Thyroid gland (tissue), 4 donors: ENCODE measurements at regions of chr11 and their contacts with region 1.

Region 1: DNA sequence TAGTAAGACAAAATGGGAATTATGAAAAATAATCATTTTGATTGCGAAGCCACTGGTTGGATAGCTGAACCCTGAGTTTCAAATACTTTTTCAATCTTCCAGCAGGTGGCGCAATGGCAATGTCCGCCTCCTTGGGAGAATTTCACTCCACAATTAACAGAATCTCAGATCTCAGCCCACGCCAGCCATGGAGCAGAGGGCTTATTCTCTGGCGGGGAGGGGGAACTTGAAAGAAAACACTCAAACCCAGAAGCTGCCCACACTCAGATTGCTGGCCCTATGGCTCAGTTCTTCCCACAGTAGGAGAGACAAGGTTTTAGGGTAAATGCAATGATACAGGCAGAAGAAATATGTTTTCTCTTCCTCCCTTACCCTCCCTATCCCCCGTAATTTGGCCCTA is 38.7 kb upstream of the RCN1 start:
- DNase-seq: peak; percentile 48 to 56
- H3K4me3 ChIP-seq: no peak overlapping the region
- H3K27ac ChIP-seq: no peak overlapping the region
- H3K4me1 ChIP-seq: no peaks in the 10 kb centered on the region
- H3K27me3 ChIP-seq: no peaks in the 10 kb centered on the region
- CTCF ChIP-seq: peak in 5 of 6 experiments; percentile 53 to 76 (median 72)
- POLR2A ChIP-seq: no peak

Region 2: DNA sequence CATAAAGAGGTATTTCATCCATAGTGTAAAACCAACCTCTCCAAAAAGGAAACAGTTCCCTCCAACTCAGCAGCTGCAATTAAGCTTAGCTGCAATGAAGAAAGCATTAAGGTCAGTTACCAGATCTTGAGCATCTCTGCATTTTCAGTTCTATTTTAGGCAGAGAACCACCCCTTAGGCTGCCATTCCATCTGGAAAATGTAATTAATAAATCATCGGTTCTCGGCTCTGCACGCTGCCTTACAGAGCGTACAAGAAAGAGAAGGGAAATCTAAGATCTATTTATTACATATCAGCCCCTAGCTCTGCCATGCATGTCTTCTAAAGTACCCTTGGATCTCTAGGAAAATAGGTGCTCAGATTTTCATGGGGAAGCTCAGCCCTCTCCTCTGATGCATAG is 110.1 kb after region 1 on chr11:
- intact Hi-C with region 1: no loop called
- DNase-seq: no peak
- H3K4me3 ChIP-seq: no peak overlapping the region
- H3K27ac ChIP-seq: no peak overlapping the region
- H3K4me1 ChIP-seq: no peaks in the 10 kb centered on the region
- H3K27me3 ChIP-seq: no peaks in the 10 kb centered on the region
- CTCF ChIP-seq: no peak
- POLR2A ChIP-seq: no peak

Region 3: GRCh38 chr11:32176223-32176934 is 124.2 kb after region 1 on chr11:
- intact Hi-C with region 1: loop called (anchors 2 kb)
- DNase-seq: peak; percentile 79 to 82
- H3K4me3 ChIP-seq: no peak overlapping the region
- H3K27ac ChIP-seq: no peak overlapping the region
- H3K4me1 ChIP-seq: no peaks in the 10 kb centered on the region
- H3K27me3 ChIP-seq: no peaks in the 10 kb centered on the region
- CTCF ChIP-seq: peak; percentile 71 to 87 (median 84)
- POLR2A ChIP-seq: no peak

Region 4: GRCh38 chr11:32297611-32298011 is 245.4 kb after region 1 on chr11:
- intact Hi-C with region 1: loop called (anchors 10 kb)
- DNase-seq: peak; percentile 37 to 45
- H3K4me3 ChIP-seq: no peak overlapping the region
- H3K27ac ChIP-seq: no peak overlapping the region
- H3K4me1 ChIP-seq: no peaks in the 10 kb centered on the region
- H3K27me3 ChIP-seq: no peaks in the 10 kb centered on the region
- CTCF ChIP-seq: peak in 4 of 6 experiments; percentile 11 to 49 (median 40)
- POLR2A ChIP-seq: no peak